GM12878 (cell line): ENCODE measurements at regions of chr1 and their contacts with region 1.

Region 1: DNA sequence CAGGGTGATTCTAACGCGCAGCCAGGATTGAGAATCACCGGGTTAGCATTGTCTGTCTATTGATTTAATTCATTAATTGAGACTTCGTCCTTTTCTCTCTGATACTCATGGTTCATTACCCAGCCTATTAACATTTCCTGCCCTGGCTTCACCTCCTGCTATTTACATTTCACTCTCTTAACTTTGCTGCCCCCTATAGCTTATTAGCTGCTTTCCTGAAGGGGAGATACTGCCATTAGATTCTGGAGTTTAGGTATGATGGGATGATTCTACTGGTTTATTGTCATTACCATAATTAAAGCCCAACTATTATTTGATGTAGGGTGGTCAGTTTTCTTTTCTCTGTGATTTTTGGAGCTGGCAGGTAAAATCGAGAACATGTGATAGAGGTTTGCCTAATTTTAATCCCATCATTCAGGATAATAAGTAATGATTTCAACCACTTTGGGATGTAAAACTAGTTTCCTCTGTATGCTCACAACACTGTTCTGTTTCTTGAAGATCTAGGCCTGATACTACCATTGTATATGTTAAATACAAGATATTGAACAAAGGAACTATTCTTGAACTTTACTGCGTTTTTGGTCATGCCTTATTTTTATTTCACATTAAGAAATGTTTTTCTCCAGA is 6.4 kb downstream of the PPP2R5A start:
- DNase-seq: no peak
- ATAC-seq: peak; percentile 87
- H3K4me3 ChIP-seq: peak overlapping the region; percentile 54; the same call in 1 of the 2 replicates
- H3K27ac ChIP-seq: no peak overlapping the region
- H3K4me1 ChIP-seq: peaks cover 18% of the 10 kb centered on the region
- H3K27me3 ChIP-seq: no peaks in the 10 kb centered on the region
- CTCF ChIP-seq: peak; percentile 63 to 87 (median 76); a peak in 5 of 6 replicates
- EP300 ChIP-seq: no peak
- POLR2A ChIP-seq: no peak
- RAD21 ChIP-seq: peak; percentile 93

Region 2: DNA sequence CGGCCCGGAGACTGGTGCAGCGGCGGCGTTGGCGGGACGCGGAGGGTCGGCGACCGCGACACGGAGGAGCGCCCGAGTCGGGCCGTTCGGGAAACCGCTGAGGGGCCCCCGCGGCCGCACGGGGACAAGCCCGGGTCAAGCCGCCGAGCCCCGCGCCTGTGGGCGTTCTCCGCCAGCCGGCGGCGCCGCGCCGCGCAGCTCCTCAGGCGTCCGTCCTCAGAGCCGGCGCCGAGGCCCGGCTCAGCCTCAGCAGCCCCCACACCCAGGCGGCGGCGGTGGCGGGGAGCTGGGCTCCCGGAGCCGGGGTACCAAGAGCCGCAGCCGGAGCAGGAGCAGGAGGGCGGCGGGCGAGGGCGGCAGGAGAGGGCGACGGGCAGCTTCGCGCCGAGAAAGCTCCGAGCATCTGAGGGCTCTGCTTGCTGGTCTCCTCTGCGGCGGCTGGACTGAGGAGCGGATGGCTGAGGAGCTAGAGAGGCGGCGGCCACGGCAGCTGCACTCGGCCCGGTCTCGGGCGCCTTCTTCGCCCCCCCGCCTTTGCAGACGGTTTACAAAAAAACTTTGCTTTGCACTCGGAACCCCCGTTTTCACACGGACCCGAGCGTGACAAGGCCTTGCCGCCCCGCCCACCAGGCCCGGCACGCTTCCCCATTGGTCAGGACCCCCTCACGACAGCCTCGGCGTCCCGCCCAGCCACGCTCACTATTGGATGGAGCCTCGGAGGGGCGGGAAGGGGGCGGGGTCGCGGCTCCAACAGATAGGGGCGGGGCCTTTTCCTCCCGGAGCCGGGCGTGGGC is 712.8 kb before region 1 on chr1 and contains the start of gene SLC30A1:
- CTCF ChIA-PET with region 1: no interaction called
- POLR2A ChIA-PET with region 1: no interaction called
- RAD21 ChIA-PET with region 1: no interaction called
- SMC1A ChIA-PET with region 1: no interaction called
- in situ Hi-C with region 1: no loop called
- intact Hi-C with region 1: loop called (anchors 10 kb)
- DNase-seq: peak; percentile 83
- ATAC-seq: peak; percentile 87
- H3K4me3 ChIP-seq: peak within 1 kb of the TSS; percentile 96
- H3K27ac ChIP-seq: peak within 1 kb of the TSS; percentile 84
- H3K4me1 ChIP-seq: peaks cover 23% of the 10 kb centered on the region
- H3K27me3 ChIP-seq: no peaks in the 10 kb centered on the region
- CTCF ChIP-seq: no peak
- EP300 ChIP-seq: peak in 1 of 2 experiments; percentile 27; a peak in 1 of 4 replicates
- POLR2A ChIP-seq: peak; percentile 91
- RAD21 ChIP-seq: no peak
- polyA plus RNA-seq, gene SLC30A1: 3.5 to 4.0 TPM

Region 3: DNA sequence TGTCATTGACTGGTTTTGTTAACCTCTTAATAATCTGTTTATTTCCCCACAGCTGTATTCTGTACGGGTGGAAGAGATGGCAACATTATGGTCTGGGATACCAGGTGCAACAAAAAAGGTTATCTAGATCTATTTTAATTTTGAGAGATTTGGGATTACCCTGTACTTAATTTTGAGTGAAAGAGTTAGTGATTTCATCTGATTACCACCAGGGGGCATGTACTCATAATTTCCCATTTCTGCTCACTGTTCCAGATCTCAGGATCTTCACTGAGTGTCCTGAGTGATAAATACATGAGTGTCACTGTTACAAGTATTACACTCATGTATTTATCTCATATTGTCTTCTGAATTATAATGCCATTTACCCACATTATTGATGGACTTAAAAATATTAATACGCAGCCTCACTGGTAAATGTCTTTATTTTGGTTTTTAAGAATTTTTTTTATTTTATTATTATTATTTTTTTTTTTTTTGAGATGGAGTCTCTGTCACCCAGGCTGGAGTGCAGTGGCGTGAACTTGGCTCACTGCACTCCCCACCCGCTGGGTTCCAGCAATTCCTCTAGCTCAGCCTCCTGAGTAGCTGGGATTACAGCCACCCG is 228.7 kb before region 1 on chr1:
- CTCF ChIA-PET with region 1: interaction called, 52 read pairs
- POLR2A ChIA-PET with region 1: no interaction called
- RAD21 ChIA-PET with region 1: interaction called, 19 read pairs
- SMC1A ChIA-PET with region 1: interaction called, 17 read pairs
- in situ Hi-C with region 1: no loop called
- intact Hi-C with region 1: loop called (anchors 2 kb)
- DNase-seq: no peak
- ATAC-seq: peak; percentile 83
- H3K4me3 ChIP-seq: no peak overlapping the region
- H3K27ac ChIP-seq: no peak overlapping the region
- H3K4me1 ChIP-seq: no peaks in the 10 kb centered on the region
- H3K27me3 ChIP-seq: no peaks in the 10 kb centered on the region
- CTCF ChIP-seq: peak; percentile 54 to 63 (median 56); a peak in 5 of 6 replicates
- EP300 ChIP-seq: no peak
- POLR2A ChIP-seq: no peak
- RAD21 ChIP-seq: peak; percentile 59

Region 4: DNA sequence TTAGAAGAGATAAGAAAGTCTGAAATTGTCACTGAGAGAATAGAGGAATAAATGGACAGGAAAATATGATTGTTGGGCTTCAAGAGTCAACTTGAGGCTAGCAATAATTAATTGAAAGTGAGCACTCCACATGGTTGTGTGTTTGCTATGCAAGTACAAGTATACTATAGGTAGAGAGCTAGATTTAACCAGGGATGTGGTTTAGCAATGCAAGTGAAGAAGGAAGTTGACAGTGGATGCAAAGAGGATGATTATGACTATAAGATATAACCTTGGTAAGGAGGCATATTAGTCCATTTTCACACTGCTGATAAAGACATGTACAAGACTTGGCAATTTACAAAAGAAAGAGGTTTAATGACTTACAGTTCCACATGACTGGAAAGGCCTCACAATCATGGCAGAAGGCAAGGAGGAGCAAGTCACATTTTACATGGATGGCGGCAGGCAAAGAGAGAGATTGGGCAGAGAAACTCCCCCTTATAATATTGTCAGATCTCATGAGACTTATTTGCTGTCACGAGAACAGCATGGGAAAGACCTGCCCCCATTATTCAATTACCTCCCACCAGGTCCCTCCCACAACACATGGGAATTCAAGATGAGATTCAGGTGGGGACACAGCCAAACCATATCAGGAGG is 208.7 kb before region 1 on chr1:
- CTCF ChIA-PET with region 1: interaction called, 3 read pairs
- POLR2A ChIA-PET with region 1: no interaction called
- RAD21 ChIA-PET with region 1: interaction called, 4 read pairs
- SMC1A ChIA-PET with region 1: interaction called, 6 read pairs
- in situ Hi-C with region 1: loop called (anchors 5 kb)
- intact Hi-C with region 1: no loop called
- DNase-seq: no peak
- ATAC-seq: no peak
- H3K4me3 ChIP-seq: no peak overlapping the region
- H3K27ac ChIP-seq: no peak overlapping the region
- H3K4me1 ChIP-seq: no peaks in the 10 kb centered on the region
- H3K27me3 ChIP-seq: no peaks in the 10 kb centered on the region
- CTCF ChIP-seq: no peak
- EP300 ChIP-seq: no peak
- POLR2A ChIP-seq: no peak
- RAD21 ChIP-seq: no peak

Region 5: GRCh38 chr1:212162635-212163034 is 129.0 kb before region 1 on chr1:
- CTCF ChIA-PET with region 1: interaction called, 4 read pairs
- POLR2A ChIA-PET with region 1: interaction called, 5 read pairs
- RAD21 ChIA-PET with region 1: interaction called, 11 read pairs
- SMC1A ChIA-PET with region 1: interaction called, 13 read pairs
- in situ Hi-C with region 1: no loop called
- intact Hi-C with region 1: loop called (anchors 2 kb)
- DNase-seq: peak; percentile 79
- ATAC-seq: peak; percentile 59
- H3K4me3 ChIP-seq: no peak overlapping the region
- H3K27ac ChIP-seq: peak overlapping the region; percentile 45
- H3K4me1 ChIP-seq: peaks cover 47% of the 10 kb centered on the region
- H3K27me3 ChIP-seq: no peaks in the 10 kb centered on the region
- CTCF ChIP-seq: no peak
- EP300 ChIP-seq: peak in 1 of 2 experiments; percentile 70; a peak in 2 of 4 replicates
- POLR2A ChIP-seq: no peak
- RAD21 ChIP-seq: no peak

Region 6: DNA sequence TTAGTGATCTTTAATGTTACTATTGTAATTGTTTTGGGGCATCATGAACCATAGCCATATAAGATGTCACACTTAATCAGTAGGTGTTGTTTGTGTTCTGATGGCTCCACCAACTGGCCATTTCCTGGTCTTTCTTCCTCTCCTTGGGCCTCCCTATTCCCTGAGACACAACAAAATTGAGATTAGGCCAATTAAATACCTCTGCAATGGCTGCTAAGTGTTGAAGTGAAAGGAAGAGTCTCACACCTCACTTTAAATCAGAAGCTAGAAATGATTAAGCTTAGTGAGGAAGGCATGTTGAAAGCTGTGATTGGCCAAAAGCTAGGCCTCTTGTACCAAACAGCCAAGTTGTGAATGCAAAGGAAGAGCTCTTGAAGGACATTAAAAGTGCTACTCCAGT is 24.3 kb after region 1 on chr1:
- CTCF ChIA-PET with region 1: interaction called, 12 read pairs
- POLR2A ChIA-PET with region 1: interaction called, 4 read pairs
- RAD21 ChIA-PET with region 1: interaction called, 6 read pairs
- SMC1A ChIA-PET with region 1: interaction called, 23 read pairs
- in situ Hi-C with region 1: no loop called
- intact Hi-C with region 1: no loop called
- DNase-seq: no peak
- ATAC-seq: peak; percentile 89
- H3K4me3 ChIP-seq: no peak overlapping the region
- H3K27ac ChIP-seq: no peak overlapping the region
- H3K4me1 ChIP-seq: no peaks in the 10 kb centered on the region
- H3K27me3 ChIP-seq: no peaks in the 10 kb centered on the region
- CTCF ChIP-seq: peak; percentile 26 to 39 (median 27); a peak in 4 of 6 replicates
- EP300 ChIP-seq: no peak
- POLR2A ChIP-seq: no peak
- RAD21 ChIP-seq: peak; percentile 51

Region 7: DNA sequence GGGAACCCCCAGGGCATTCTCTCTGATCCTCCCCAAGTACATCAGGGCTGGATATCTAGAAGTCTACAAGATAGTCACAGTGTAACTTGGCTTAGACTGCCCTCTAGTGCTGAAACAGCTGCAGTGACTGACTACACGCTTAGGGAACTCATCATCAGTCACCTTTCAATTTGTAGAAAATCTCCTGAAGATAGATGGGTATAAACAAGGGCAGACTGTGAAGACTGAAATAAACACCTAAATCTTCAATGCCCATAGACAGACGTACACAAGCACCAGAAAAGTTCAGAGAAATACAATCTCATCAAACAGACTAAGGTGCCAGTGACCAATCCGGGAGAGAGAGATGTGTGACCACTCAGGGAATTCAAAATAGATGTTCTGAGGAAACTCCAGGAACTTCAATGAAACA is 76.5 kb after region 1 on chr1:
- CTCF ChIA-PET with region 1: interaction called, 5 read pairs
- POLR2A ChIA-PET with region 1: no interaction called
- RAD21 ChIA-PET with region 1: interaction called, 3 read pairs
- SMC1A ChIA-PET with region 1: interaction called, 18 read pairs
- in situ Hi-C with region 1: no loop called
- intact Hi-C with region 1: no loop called
- DNase-seq: peak; percentile 36
- ATAC-seq: peak; percentile 99
- H3K4me3 ChIP-seq: no peak overlapping the region
- H3K27ac ChIP-seq: no peak overlapping the region
- H3K4me1 ChIP-seq: no peaks in the 10 kb centered on the region
- H3K27me3 ChIP-seq: no peaks in the 10 kb centered on the region
- CTCF ChIP-seq: peak; percentile 77 to 90 (median 87)
- EP300 ChIP-seq: no peak
- POLR2A ChIP-seq: no peak
- RAD21 ChIP-seq: peak; percentile 90